Transverse colon (tissue), 4 donors: ENCODE measurements at regions of chr1 and their contacts with region 1.

Region 1: GRCh38 chr1:20521960-20522861 is 14.3 kb upstream of the MUL1 start:
- DNase-seq: peak; percentile 86
- H3K4me3 ChIP-seq: peak overlapping the region in 1 of 4 donors; percentile 18
- H3K27ac ChIP-seq: no peak overlapping the region
- H3K4me1 ChIP-seq: peaks cover 0 to 6% (median 0%) of the 10 kb centered on the region in 4 donors
- H3K27me3 ChIP-seq: peaks cover 5% of the 10 kb centered on the region
- CTCF ChIP-seq: peak; percentile 83 to 96 (median 88)
- EP300 ChIP-seq: no peak
- POLR2A ChIP-seq: no peak

Region 2: DNA sequence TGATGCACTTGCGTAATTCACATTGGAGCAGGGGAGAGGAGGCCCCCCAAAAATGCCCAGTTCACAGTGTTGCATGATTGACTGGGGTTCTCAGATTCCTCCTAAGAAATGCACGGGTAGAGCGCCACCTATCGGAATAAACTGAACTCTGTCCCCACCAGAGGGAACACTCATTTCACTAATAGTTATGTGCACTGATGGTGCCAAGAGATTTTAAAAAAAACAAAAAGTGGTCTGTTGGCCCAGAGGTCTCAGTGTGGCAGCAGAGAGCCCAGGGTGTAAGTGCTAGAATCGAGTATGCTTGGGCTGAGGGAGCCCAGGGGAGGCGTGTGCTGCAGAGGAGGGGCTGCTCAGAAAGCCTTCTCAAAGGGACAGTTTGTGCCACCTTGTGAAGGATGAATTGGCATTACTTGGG is 118.0 kb after region 1 on chr1:
- in situ Hi-C with region 1: loop called (anchors 5 to 10 kb)
- intact Hi-C with region 1: loop called (anchors 5 kb)
- DNase-seq: peak; percentile 61
- H3K4me3 ChIP-seq: no peak overlapping the region
- H3K27ac ChIP-seq: no peak overlapping the region
- H3K4me1 ChIP-seq: peaks cover 0 to 5% (median 0%) of the 10 kb centered on the region in 4 donors
- H3K27me3 ChIP-seq: no peaks in the 10 kb centered on the region
- CTCF ChIP-seq: peak; percentile 76 to 87 (median 79)
- EP300 ChIP-seq: no peak
- POLR2A ChIP-seq: no peak